ENCODE measurements at regions of chr14 and their contacts with region 1.

Region 1: GRCh38 chr14:24215495-24216344 is at the start of gene MDP1:
- DNase-seq: peak; percentile 75 to 96 (median 88)
- ATAC-seq: peak; percentile 72
- H3K4me3 ChIP-seq: peak within 1 kb of the TSS; percentile 86 to 95
- H3K4me3 Mint-ChIP-seq: peak within 1 kb of the TSS; percentile 93
- H3K27ac ChIP-seq: peak within 1 kb of the TSS; percentile 87 to 97
- H3K27ac Mint-ChIP-seq: peak within 1 kb of the TSS; percentile 99
- H3K4me1 ChIP-seq: peaks cover 32% of the 10 kb centered on the region
- H3K4me1 Mint-ChIP-seq: peaks cover 52% of the 10 kb centered on the region
- H3K27me3 ChIP-seq: no peaks in the 10 kb centered on the region
- H3K27me3 Mint-ChIP-seq: no peaks in the 10 kb centered on the region
- CTCF ChIP-seq: peak; percentile 63
- total RNA-seq, gene MDP1: 4.2 to 4.5 TPM

Region 2: DNA sequence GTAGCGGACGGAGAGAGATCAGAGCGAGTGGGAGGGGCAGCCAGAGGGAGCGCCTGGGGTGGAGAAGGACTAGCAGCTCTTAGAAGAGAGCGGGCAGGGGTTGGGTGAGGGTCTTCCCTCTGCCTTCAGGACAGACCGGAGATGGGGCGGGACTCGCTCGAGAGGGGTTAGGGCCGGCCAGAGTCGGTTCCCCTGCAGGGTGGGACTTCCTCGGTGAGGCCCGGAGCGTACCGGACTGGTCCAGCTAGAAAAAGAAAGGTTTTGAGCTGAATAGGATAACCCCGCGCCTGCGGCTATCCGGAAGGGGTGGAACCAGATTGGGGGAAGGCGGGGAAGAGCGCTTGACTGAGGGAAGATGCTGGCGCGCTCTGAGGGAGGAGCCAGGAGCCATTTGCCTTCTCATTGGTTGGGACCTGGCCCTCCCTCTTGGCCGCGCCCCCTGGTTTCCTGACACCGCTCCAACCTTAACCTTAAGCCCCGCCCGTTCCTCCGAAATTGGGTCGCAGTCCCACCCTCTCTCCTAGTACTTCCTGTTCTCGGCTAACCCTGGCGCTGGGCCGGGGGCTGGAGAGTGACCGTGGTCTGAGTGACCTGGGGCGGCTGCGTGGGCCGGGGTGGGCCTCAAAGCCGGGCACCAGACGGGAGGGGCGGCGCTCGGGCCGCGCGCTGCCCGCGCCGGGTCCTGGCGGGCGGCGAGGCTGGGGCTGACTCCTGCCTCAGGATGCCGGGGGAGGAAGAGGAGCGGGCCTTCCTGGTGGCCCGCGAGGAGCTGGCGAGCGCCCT is 68.6 kb before region 1 on chr14 and contains the start of gene RNF31:
- CTCF ChIA-PET with region 1: no interaction called
- POLR2A ChIA-PET with region 1: interaction called, 9 read pairs
- intact Hi-C with region 1: loop called (anchors 1 kb)
- DNase-seq: peak; percentile 93 to 99 (median 97)
- ATAC-seq: peak; percentile 89
- H3K4me3 ChIP-seq: peak within 1 kb of the TSS; percentile 96 to 99
- H3K4me3 Mint-ChIP-seq: peak within 1 kb of the TSS; percentile 95
- H3K27ac ChIP-seq: peak within 1 kb of the TSS; percentile 79 to 91
- H3K27ac Mint-ChIP-seq: peak within 1 kb of the TSS; percentile 93
- H3K4me1 ChIP-seq: peaks cover 34% of the 10 kb centered on the region
- H3K4me1 Mint-ChIP-seq: peaks cover 53% of the 10 kb centered on the region
- H3K27me3 ChIP-seq: no peaks in the 10 kb centered on the region
- H3K27me3 Mint-ChIP-seq: no peaks in the 10 kb centered on the region
- CTCF ChIP-seq: no peak
- total RNA-seq, gene RNF31: 45.4 to 51.7 TPM

Region 3: DNA sequence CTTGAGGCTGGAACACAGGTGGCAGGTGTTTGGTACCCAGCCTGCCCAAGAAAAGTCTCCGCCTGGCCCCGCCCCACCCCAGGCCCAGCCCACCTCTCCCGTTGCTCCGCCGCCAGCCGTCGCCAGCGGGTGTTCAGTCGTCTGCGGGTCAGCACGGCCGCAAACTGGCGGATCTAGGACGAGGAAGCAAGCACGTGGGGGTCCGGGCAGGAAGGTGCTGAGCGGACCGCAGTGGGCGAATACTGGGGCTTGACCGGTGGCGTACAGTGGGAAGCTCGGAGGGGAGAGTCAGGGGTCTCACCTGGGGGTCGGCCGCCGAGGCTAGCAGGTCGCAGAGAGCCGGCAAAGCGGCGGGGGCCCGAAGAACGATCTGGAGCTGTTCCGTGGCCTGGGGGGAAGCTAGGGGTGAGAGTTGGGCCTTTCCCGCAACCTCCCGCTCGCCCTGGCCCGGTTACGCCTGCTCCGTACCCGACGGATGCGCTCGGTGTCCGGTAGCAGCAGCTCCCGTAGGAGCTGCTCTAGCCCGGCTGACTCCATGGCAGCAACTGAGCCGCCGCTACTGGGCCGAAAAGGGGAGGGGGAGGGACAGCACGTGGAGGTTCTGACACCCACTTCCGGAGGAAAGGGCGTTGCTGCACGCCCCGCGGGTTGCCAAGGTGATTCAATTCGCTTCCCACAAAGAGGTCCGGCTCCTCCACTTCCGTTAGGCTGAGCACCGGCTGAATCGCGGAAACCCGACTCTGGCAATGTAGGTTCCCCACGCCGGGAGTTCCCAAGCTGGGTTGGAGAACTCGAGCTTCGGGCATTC is 27.3 kb before region 1 on chr14 and contains the start of gene IPO4:
- CTCF ChIA-PET with region 1: interaction called, 11 read pairs
- POLR2A ChIA-PET with region 1: interaction called, 50 read pairs
- intact Hi-C with region 1: loop called (anchors 1 kb)
- DNase-seq: peak; percentile 86 to 99 (median 94)
- ATAC-seq: peak; percentile 91
- H3K4me3 ChIP-seq: peak within 1 kb of the TSS; percentile 77 to 82
- H3K4me3 Mint-ChIP-seq: peak within 1 kb of the TSS; percentile 89
- H3K27ac ChIP-seq: peak within 1 kb of the TSS; percentile 61 to 89
- H3K27ac Mint-ChIP-seq: peak within 1 kb of the TSS; percentile 87
- H3K4me1 ChIP-seq: peaks cover 17% of the 10 kb centered on the region
- H3K4me1 Mint-ChIP-seq: peaks cover 38% of the 10 kb centered on the region
- H3K27me3 ChIP-seq: no peaks in the 10 kb centered on the region
- H3K27me3 Mint-ChIP-seq: no peaks in the 10 kb centered on the region
- CTCF ChIP-seq: no peak
- total RNA-seq, gene IPO4: 69.2 to 75.6 TPM

Region 4: GRCh38 chr14:24241829-24242443 is 26.2 kb after region 1 on chr14:
- CTCF ChIA-PET with region 1: interaction called, 23 read pairs
- POLR2A ChIA-PET with region 1: interaction called, 26 read pairs
- intact Hi-C with region 1: loop called (anchors 1 kb)
- DNase-seq: peak; percentile 84 to 97 (median 94)
- ATAC-seq: peak; percentile 83
- H3K4me3 ChIP-seq: peak overlapping the region; percentile 75 to 83
- H3K4me3 Mint-ChIP-seq: peak overlapping the region; percentile 99
- H3K27ac ChIP-seq: peak overlapping the region; percentile 98
- H3K27ac Mint-ChIP-seq: peak overlapping the region; percentile 100
- H3K4me1 ChIP-seq: peaks cover 41% of the 10 kb centered on the region
- H3K4me1 Mint-ChIP-seq: peaks cover 58% of the 10 kb centered on the region
- H3K27me3 ChIP-seq: no peaks in the 10 kb centered on the region
- H3K27me3 Mint-ChIP-seq: no peaks in the 10 kb centered on the region
- CTCF ChIP-seq: peak; percentile 48

Region 5: GRCh38 chr14:24310646-24311604 is 95.2 kb after region 1 on chr14 and contains the start of gene LTB4R:
- CTCF ChIA-PET with region 1: interaction called, 7 read pairs
- POLR2A ChIA-PET with region 1: interaction called, 6 read pairs
- intact Hi-C with region 1: loop called in 1 of 2 experiments (anchors 1 kb)
- DNase-seq: peak; percentile 41 to 89 (median 68)
- ATAC-seq: peak; percentile 80
- H3K4me3 ChIP-seq: peak within 1 kb of the TSS; percentile 52 to 57
- H3K4me3 Mint-ChIP-seq: peak within 1 kb of the TSS; percentile 75
- H3K27ac ChIP-seq: peak within 1 kb of the TSS; percentile 63 to 78
- H3K27ac Mint-ChIP-seq: peak within 1 kb of the TSS; percentile 90
- H3K4me1 ChIP-seq: peaks cover 62% of the 10 kb centered on the region
- H3K4me1 Mint-ChIP-seq: peaks cover 72% of the 10 kb centered on the region
- H3K27me3 ChIP-seq: no peaks in the 10 kb centered on the region
- H3K27me3 Mint-ChIP-seq: no peaks in the 10 kb centered on the region
- CTCF ChIP-seq: no peak
- total RNA-seq, gene LTB4R: 15.4 to 16.7 TPM

Region 6: DNA sequence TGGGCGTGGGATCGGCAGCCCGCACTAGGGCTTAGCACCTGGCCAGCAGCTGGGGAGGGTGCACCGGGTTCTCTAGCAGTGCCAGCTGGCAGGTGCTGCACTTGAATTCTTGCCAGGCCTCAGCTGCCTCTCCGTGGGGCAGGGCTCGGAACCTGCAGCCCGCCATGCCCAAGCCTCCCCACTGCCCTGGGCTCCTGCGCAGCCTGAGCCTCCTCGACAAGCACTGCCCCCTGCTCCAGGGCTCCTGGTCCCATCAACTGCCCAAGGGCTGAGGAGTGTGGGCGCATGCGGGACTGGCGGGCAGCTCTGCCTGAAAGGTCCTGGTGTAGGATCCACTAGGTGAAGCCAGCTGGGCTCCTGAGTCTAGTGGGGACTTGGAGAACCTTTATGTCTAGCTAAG is 257.5 kb after region 1 on chr14:
- CTCF ChIA-PET with region 1: no interaction called
- POLR2A ChIA-PET with region 1: no interaction called
- intact Hi-C with region 1: no loop called
- DNase-seq: no peak
- ATAC-seq: no peak
- H3K4me3 ChIP-seq: no peak overlapping the region
- H3K4me3 Mint-ChIP-seq: no peak overlapping the region
- H3K27ac ChIP-seq: no peak overlapping the region
- H3K27ac Mint-ChIP-seq: no peak overlapping the region
- H3K4me1 ChIP-seq: no peaks in the 10 kb centered on the region
- H3K4me1 Mint-ChIP-seq: no peaks in the 10 kb centered on the region
- H3K27me3 ChIP-seq: no peaks in the 10 kb centered on the region
- H3K27me3 Mint-ChIP-seq: peaks cover 2% of the 10 kb centered on the region
- CTCF ChIP-seq: no peak

Region 7: DNA sequence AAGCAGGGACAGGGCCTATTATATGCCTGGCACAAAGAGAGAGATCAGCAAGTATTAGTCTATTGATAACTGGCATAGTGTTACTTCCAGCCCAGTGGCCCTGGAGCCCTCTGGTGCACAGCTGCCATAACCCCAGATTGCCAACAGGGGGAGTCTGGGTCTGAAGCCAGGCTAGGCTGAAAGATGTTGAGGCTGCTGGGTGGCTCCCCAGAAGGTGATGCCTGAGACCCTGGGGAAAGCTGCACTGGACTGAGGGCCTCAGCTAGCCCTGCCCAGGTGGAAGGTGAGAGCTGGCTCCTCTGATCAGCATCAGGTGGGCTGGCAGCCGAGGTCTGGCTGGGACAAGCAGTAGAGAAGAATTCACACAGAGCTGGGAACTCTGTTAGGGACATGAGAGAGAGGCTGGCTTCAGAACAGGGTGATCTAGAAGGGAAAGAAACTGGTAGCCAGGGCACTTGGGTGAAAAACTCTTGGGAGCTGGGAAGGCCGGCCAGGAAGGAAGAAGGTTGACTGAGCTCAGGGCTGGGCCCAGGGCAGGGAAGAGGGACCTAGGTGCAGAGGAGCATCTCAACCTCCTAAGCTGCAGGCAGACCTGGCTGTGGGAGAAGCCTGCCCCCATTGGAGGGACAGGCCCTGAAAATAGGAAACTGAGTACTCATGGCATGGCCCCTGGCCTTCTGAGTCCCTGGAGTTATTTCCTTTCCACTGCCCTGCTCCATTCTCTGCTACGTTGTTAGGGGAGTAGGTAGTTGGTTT is 389.9 kb after region 1 on chr14:
- CTCF ChIA-PET with region 1: no interaction called
- POLR2A ChIA-PET with region 1: no interaction called
- intact Hi-C with region 1: no loop called
- DNase-seq: peak; percentile 41 to 77 (median 64)
- ATAC-seq: peak; percentile 79
- H3K4me3 ChIP-seq: peak overlapping the region in 1 of 2 experiments; percentile 19
- H3K4me3 Mint-ChIP-seq: no peak overlapping the region
- H3K27ac ChIP-seq: peak overlapping the region in 1 of 2 experiments; percentile 71
- H3K27ac Mint-ChIP-seq: peak overlapping the region; percentile 88
- H3K4me1 ChIP-seq: peaks cover 5% of the 10 kb centered on the region
- H3K4me1 Mint-ChIP-seq: peaks cover 35% of the 10 kb centered on the region
- H3K27me3 ChIP-seq: no peaks in the 10 kb centered on the region
- H3K27me3 Mint-ChIP-seq: peaks cover 7% of the 10 kb centered on the region
- CTCF ChIP-seq: peak; percentile 87

Measured in CD8-positive, alpha-beta T cell (primary cell).